PC-3 (cell line): ENCODE measurements at regions of chr9 and their contacts with region 1.

Region 1: GRCh38 chr9:107484117-107484723 is 5.3 kb downstream of the KLF4 start:
- DNase-seq: peak; percentile 74
- ATAC-seq: peak; percentile 40
- H3K4me3 ChIP-seq: no peak overlapping the region
- H3K27ac ChIP-seq: no peak overlapping the region
- H3K4me1 ChIP-seq: peaks cover 27% of the 10 kb centered on the region
- H3K27me3 ChIP-seq: no peaks in the 10 kb centered on the region
- CTCF ChIP-seq: peak; percentile 66

Region 2: GRCh38 chr9:107421947-107422793 is 62.0 kb before region 1 on chr9:
- CTCF ChIA-PET with region 1: interaction called, 3 read pairs
- POLR2A ChIA-PET with region 1: no interaction called
- intact Hi-C with region 1: loop called (anchors 1 kb)
- DNase-seq: peak; percentile 75
- ATAC-seq: peak; percentile 97
- H3K4me3 ChIP-seq: no peak overlapping the region
- H3K27ac ChIP-seq: no peak overlapping the region
- H3K4me1 ChIP-seq: peaks cover 4% of the 10 kb centered on the region; the same call in 1 of the 2 replicates
- H3K27me3 ChIP-seq: no peaks in the 10 kb centered on the region
- CTCF ChIP-seq: peak; percentile 74

Region 3: GRCh38 chr9:107600060-107600573 is 115.9 kb after region 1 on chr9:
- CTCF ChIA-PET with region 1: no interaction called
- POLR2A ChIA-PET with region 1: no interaction called
- intact Hi-C with region 1: no loop called
- DNase-seq: no peak
- ATAC-seq: no peak
- H3K4me3 ChIP-seq: no peak overlapping the region
- H3K27ac ChIP-seq: no peak overlapping the region
- H3K4me1 ChIP-seq: no peaks in the 10 kb centered on the region
- H3K27me3 ChIP-seq: no peaks in the 10 kb centered on the region
- CTCF ChIP-seq: no peak

Region 4: GRCh38 chr9:108049026-108049591 is 564.9 kb after region 1 on chr9:
- CTCF ChIA-PET with region 1: no interaction called
- POLR2A ChIA-PET with region 1: interaction called, 3 read pairs
- intact Hi-C with region 1: loop called (anchors 5 kb)
- DNase-seq: peak; percentile 94
- ATAC-seq: peak; percentile 88
- H3K4me3 ChIP-seq: no peak overlapping the region
- H3K27ac ChIP-seq: peak overlapping the region; percentile 79
- H3K4me1 ChIP-seq: peaks cover 34% of the 10 kb centered on the region
- H3K27me3 ChIP-seq: no peaks in the 10 kb centered on the region
- CTCF ChIP-seq: no peak